H1 (cell line): ENCODE measurements at regions of chr1 and their contacts with region 1.

Region 1: DNA sequence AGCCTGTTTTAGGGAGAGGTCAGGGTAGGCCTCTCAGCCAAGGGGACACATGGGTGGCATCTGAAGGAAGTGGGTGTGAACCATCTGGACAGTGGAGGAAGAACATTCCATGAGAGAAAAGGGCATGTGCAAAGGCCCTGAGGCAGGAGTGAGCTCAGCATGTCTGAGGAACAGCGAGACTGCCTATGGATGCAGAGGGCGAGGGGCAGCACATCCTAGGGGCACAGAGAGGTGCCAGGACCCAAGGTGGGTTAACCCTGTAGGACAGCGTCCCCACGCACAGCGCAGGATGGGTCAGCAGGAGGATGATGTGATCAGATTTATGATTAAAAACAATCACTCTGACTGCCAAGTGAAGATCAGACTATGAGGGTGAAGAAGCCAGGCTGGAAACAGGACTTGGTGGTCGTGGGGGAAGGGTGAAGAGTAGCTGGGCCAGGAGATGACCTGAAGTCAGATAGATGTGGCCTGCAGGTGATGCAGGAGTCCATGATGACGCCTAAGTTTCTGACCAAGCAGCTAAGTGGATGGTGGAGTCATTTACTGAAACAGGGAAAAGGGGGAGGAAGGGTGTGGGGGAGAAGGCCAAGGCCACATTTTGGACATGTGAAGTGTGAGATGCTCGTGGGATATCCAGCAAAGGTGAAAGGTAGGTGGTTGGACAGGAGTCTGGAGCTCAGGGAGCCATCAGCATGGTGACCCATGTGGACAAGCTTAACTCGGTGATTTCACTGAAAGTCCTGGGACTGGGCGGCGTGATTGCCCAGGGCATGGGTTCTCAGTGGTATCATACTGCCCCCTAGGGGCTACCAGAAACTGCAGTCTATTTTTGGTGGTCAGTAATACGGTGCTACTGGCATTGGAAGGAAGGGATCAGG is 37.8 kb downstream of the PABPC4 start:
- DNase-seq: peak; percentile 25 to 75
- H3K4me3 ChIP-seq: no peak overlapping the region
- H3K27ac ChIP-seq: no peak overlapping the region
- H3K4me1 ChIP-seq: no peaks in the 10 kb centered on the region
- H3K27me3 ChIP-seq: no peaks in the 10 kb centered on the region
- CTCF ChIP-seq: peak; percentile 63 to 91 (median 87)
- EP300 ChIP-seq: no peak
- POLR2A ChIP-seq: no peak
- RAD21 ChIP-seq: peak; percentile 92 to 93

Region 2: DNA sequence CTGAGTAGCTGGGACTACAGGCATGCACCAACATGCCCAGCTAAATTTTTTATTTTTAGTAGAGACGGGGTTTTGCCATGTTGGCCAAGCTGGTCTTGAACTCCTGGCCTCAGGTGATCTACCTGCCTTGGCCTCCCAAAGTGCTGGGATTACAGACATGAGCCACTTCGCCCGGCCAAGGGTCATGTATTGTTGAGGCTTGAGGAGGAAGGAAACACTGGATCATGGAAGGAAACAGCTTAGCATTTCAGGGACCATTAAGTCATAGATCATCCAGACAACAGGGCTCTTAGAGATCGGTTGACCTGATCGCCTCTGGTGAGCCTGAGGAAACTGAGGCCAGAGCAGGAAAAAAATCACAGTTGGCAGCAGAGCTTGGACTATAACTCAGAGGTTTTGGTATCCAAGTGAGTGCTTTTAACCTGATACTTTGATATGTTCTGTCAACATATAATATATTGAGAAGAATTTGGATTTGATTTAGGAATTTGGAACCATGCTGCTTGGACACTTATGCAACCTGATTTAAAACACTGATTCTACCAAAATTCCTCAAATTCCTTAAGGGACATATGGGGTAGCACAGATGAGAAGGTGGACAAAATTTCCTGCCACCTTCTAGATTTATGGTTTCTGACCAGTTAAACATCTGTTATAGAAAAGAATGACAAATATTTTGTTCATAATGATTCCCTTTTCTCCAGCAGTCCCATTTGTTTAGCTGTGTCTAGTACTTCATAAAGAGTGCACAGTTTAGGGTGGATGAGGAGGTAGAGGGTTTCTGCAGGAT is 60.5 kb before region 1 on chr1:
- CTCF ChIA-PET with region 1: interaction called, 68 read pairs
- POLR2A ChIA-PET with region 1: no interaction called
- DNase-seq: no peak
- H3K4me3 ChIP-seq: no peak overlapping the region
- H3K27ac ChIP-seq: no peak overlapping the region
- H3K4me1 ChIP-seq: no peaks in the 10 kb centered on the region
- H3K27me3 ChIP-seq: no peaks in the 10 kb centered on the region
- CTCF ChIP-seq: no peak
- EP300 ChIP-seq: no peak
- POLR2A ChIP-seq: no peak
- RAD21 ChIP-seq: no peak

Region 3: GRCh38 chr1:39491146-39491921 is 47.5 kb before region 1 on chr1 and contains the start of gene BMP8A:
- CTCF ChIA-PET with region 1: interaction called, 25 read pairs
- POLR2A ChIA-PET with region 1: interaction called, 3 read pairs
- DNase-seq: peak in 1 of 2 experiments; percentile 88
- H3K4me3 ChIP-seq: peak within 1 kb of the TSS; percentile 37 to 61 (median 45)
- H3K27ac ChIP-seq: no peak within 1 kb of the TSS
- H3K4me1 ChIP-seq: no peaks in the 10 kb centered on the region; a peak in 1 of 7 replicates
- H3K27me3 ChIP-seq: peaks cover 18 to 49% (median 43%) of the 10 kb centered on the region in 4 experiments
- CTCF ChIP-seq: no peak
- EP300 ChIP-seq: no peak
- POLR2A ChIP-seq: no peak
- RAD21 ChIP-seq: no peak
- total RNA-seq, gene BMP8A: 0.43 and 0.63 TPM in 2 replicates

Region 4: GRCh38 chr1:39525366-39526165 is 13.3 kb before region 1 on chr1:
- CTCF ChIA-PET with region 1: interaction called, 20 read pairs
- POLR2A ChIA-PET with region 1: interaction called, 4 read pairs
- DNase-seq: no peak
- H3K4me3 ChIP-seq: no peak overlapping the region
- H3K27ac ChIP-seq: no peak overlapping the region
- H3K4me1 ChIP-seq: no peaks in the 10 kb centered on the region
- H3K27me3 ChIP-seq: no peaks in the 10 kb centered on the region; a peak in 1 of 7 replicates
- CTCF ChIP-seq: no peak
- EP300 ChIP-seq: no peak
- POLR2A ChIP-seq: no peak
- RAD21 ChIP-seq: no peak

Region 5: GRCh38 chr1:39575191-39576015 is 36.6 kb after region 1 on chr1:
- CTCF ChIA-PET with region 1: interaction called, 4 read pairs
- POLR2A ChIA-PET with region 1: interaction called, 15 read pairs
- DNase-seq: no peak
- H3K4me3 ChIP-seq: peak overlapping the region; percentile 68 to 99 (median 73)
- H3K27ac ChIP-seq: no peak overlapping the region
- H3K4me1 ChIP-seq: peaks cover 0 to 19% (median 7%) of the 10 kb centered on the region in 4 experiments; a peak in 5 of 7 replicates
- H3K27me3 ChIP-seq: no peaks in the 10 kb centered on the region
- CTCF ChIP-seq: no peak
- EP300 ChIP-seq: no peak
- POLR2A ChIP-seq: 0 out of 3 replicates have a peak, but pooled peaks of 1 of the 2 experiments have one; percentile 27
- RAD21 ChIP-seq: no peak